ENCODE measurements at regions of chr22 and their contacts with region 1.

Region 1: DNA sequence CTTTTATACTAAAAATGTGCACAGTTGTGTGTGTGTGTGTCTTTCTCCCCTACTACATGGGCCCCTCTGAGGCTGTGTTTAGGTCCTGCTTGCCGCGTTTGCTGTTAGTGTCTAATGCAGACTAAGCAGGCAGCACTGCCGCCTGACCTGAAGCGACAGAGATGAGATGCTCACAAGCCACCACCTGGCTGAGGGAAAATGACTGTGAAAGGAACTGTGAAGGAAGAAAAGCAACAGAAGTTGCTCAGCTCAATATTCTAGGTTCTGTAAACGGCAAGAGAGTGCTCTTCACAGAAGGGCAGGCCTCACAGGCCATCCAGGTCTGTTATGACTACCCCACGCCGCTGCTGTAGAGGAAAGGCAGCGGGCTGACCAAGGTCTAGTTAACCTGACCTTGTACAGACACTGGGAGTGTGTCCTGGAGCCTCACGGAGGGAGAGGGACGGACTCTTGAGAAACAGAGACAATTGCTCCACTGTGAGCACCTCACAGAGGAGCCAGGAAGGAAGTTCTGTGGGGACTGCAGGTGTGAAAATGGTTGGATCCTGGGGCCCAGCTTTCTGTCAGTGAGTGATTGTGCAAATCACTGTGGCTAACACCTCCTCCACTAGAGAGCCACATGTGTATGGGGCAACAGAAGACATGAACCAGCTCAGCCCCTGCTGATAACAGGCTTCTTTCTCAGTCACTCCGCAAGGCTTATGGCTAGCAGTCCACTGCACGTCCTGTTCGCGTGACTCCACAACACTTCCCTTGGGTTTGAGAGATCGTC is 31.3 kb upstream of the YPEL1 start:
- DNase-seq: peak; percentile 85
- H3K4me3 Mint-ChIP-seq: peak overlapping the region; percentile 5
- H3K27ac Mint-ChIP-seq: peak overlapping the region; percentile 66
- H3K4me1 Mint-ChIP-seq: peaks cover 68% of the 10 kb centered on the region
- H3K27me3 Mint-ChIP-seq: peaks cover 5% of the 10 kb centered on the region

Region 2: DNA sequence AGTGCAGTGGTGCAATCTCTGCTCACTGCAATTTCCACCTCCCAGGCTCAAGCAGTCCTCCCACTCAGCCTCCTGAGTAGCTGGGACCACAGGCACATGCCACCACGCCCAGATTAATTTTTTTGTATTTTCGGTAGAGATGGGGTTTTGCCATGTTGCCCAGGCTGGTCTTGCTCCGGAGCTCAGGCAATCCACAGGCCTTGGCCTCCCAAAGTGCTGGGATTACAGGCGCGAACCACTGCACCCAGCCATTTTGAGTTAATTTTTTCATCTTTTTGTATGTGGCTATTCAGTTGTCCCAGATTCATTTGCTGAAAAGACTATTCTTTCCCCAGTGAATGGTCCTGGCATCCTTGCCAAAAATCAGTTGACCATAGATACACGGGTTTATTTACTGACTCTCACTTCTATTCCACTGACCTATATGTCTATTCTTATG is 37.0 kb after region 1 on chr22:
- CTCF ChIA-PET with region 1: no interaction called
- POLR2A ChIA-PET with region 1: no interaction called
- intact Hi-C with region 1: no loop called
- DNase-seq: no peak
- H3K4me3 Mint-ChIP-seq: no peak overlapping the region
- H3K27ac Mint-ChIP-seq: no peak overlapping the region
- H3K4me1 Mint-ChIP-seq: peaks cover 12% of the 10 kb centered on the region
- H3K27me3 Mint-ChIP-seq: no peaks in the 10 kb centered on the region

Region 3: GRCh38 chr22:21816787-21817496 is 50.1 kb after region 1 on chr22:
- CTCF ChIA-PET with region 1: no interaction called
- POLR2A ChIA-PET with region 1: interaction called, 4 read pairs
- intact Hi-C with region 1: loop called (anchors 2 kb)
- DNase-seq: peak; percentile 35
- H3K4me3 Mint-ChIP-seq: peak overlapping the region; percentile 33
- H3K27ac Mint-ChIP-seq: peak overlapping the region; percentile 81
- H3K4me1 Mint-ChIP-seq: peaks cover 56% of the 10 kb centered on the region
- H3K27me3 Mint-ChIP-seq: no peaks in the 10 kb centered on the region

Measured in activated CD4-positive, alpha-beta memory T cell treated with anti-CD3 and anti-CD28 coated beads for 36 hours (primary cell).